ENCODE measurements at regions of chr9 and their contacts with region 1.

Region 1: DNA sequence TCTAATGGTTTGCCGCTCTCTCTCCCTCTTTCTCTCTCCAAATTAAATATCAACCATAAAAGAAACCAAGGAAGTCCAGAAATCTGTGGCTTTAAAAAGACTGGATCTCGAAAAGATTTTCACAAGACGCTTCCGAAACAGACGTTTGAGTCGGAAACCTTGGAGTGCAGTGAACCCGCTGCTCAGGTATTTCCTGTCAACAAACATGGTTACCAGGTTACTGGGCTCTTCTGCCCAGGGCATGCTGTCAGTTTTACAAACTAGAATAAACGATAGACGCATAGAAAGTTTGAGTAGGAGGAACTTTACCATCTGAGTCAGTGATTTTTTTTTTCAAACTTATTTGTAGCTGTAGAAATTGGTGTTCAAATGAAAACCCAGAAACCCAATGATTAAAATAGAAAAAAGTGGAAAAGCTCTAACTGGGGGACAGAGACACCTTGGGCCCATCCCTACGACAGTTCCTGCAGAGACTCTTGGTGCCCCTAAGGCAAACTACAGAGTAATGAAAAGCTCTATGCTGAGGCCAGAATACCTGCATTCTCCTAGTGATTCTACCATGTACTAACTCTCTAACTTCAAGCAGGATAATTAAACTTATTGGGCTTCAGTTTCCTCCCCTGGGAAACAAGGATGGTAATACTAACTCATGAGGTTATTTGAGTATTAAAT is 90.0 kb downstream of the DOCK8 start:
- DNase-seq: no peak
- H3K4me3 ChIP-seq: no peak overlapping the region
- H3K27ac ChIP-seq: no peak overlapping the region
- H3K27me3 ChIP-seq: peaks cover 0 to 15% (median 0%) of the 10 kb centered on the region in 45 donors
- CTCF ChIP-seq: no peak

Region 2: GRCh38 chr9:354453-354852 is 49.8 kb after region 1 on chr9:
- intact Hi-C with region 1: loop called in 1 of 2 experiments (anchors 5 kb)
- DNase-seq: no peak
- H3K4me3 ChIP-seq: no peak overlapping the region
- H3K27ac ChIP-seq: no peak overlapping the region
- H3K27me3 ChIP-seq: peaks cover 0 to 11% (median 0%) of the 10 kb centered on the region in 45 donors
- CTCF ChIP-seq: no peak

Measured in dorsolateral prefrontal cortex (tissue), 120 donors.